AG04450 (cell line): ENCODE measurements at regions of chrX and their contacts with region 1.

Region 1: GRCh38 chrX:107672955-107673378 is 44.7 kb downstream of the PRPS1 start:
- DNase-seq: no peak
- H3K4me3 ChIP-seq: no peak overlapping the region
- H3K27ac ChIP-seq: no peak overlapping the region
- H3K27me3 ChIP-seq: no peaks in the 10 kb centered on the region
- CTCF ChIP-seq: peak; percentile 64

Region 2: GRCh38 chrX:107360788-107361363 is 312.1 kb before region 1 on chrX:
- CTCF ChIA-PET with region 1: no interaction called
- POLR2A ChIA-PET with region 1: no interaction called
- DNase-seq: no peak
- H3K4me3 ChIP-seq: no peak overlapping the region
- H3K27ac ChIP-seq: no peak overlapping the region
- H3K27me3 ChIP-seq: no peaks in the 10 kb centered on the region
- CTCF ChIP-seq: no peak

Region 3: DNA sequence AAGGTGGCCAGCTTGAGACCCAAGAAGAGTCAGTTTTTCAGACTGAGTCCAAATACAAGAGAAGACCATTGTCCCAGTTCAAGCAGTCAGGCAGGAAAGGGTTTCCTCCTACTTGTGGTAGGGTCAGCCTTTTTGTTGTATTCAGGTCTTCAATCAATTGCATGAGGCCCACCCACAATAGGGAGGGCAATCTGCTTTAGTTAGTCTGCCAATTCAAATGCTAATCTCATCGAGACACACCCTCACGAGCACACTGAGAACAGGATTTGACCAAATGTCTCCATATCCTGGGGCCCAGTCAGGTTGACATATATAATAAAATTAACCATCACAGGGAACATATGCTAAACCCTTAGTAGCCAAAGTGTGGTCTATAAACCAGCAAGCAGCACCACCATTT is 298.8 kb before region 1 on chrX:
- CTCF ChIA-PET with region 1: no interaction called
- POLR2A ChIA-PET with region 1: no interaction called
- DNase-seq: no peak
- H3K4me3 ChIP-seq: no peak overlapping the region
- H3K27ac ChIP-seq: no peak overlapping the region
- H3K27me3 ChIP-seq: no peaks in the 10 kb centered on the region
- CTCF ChIP-seq: no peak

Region 4: GRCh38 chrX:107710617-107711391 is 37.8 kb after region 1 on chrX:
- CTCF ChIA-PET with region 1: interaction called, 45 read pairs
- POLR2A ChIA-PET with region 1: no interaction called
- DNase-seq: peak; percentile 55
- H3K4me3 ChIP-seq: no peak overlapping the region
- H3K27ac ChIP-seq: peak overlapping the region; percentile 70
- H3K27me3 ChIP-seq: no peaks in the 10 kb centered on the region
- CTCF ChIP-seq: no peak

Region 5: GRCh38 chrX:107716816-107717700 is 44.1 kb after region 1 on chrX:
- CTCF ChIA-PET with region 1: interaction called, 45 read pairs
- POLR2A ChIA-PET with region 1: interaction called, 8 read pairs
- DNase-seq: no peak
- H3K4me3 ChIP-seq: peak overlapping the region; percentile 66
- H3K27ac ChIP-seq: peak overlapping the region; percentile 31
- H3K27me3 ChIP-seq: no peaks in the 10 kb centered on the region
- CTCF ChIP-seq: no peak